Right cardiac atrium (tissue), 5 donors: ENCODE measurements at regions of chr10 and their contacts with region 1.

Region 1: DNA sequence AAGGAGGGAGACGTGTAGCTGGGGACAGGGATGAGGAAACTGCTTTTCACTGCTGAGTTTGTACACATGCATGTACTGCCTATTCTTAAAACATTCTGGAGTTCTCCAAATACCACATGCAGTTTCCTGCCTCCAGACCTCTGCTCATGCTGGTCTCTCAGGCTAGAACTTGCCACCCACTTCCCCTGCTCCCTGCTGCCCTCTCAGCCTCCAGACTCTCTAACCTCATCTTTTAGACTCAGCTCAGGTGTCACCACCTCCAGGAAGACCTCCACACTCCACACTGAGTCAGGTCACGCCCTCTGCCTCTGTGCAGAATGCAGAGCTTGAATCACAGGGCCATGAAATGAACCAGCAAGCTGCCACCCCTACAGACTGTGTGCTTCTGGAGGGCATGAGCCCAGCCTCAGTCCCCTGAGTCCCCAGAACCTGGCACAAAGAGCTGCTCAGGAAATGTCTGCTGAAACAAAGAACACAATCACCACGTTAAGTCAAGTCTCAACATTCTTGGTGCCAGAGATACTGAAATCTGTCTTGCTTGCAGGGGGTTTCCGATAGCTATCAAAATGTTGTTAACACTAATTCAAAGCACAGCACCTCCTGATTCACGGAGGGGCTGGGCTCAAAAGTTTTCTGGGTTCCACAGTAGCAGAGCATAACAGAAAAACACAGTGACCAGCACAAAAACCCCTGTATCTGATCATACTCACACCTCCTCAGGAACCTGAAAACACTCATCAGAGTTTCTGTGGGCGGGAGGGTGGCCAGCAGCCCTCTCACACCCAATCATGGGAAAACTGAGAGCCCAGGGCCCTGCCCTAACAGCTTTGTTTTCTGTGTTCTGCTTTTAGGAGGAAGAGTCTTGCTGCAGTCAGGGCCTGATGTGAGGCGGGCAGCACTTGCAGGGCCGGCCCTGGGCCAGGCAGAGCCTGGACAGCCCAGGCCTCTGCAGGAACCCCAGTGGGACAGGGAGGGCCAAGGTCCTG is 21.1 kb downstream of the FAM53B start:
- DNase-seq: peak; percentile 58 to 84 (median 84)
- ATAC-seq: peak; percentile 61 to 77
- H3K4me3 ChIP-seq: no peak overlapping the region
- H3K27ac ChIP-seq: peak overlapping the region; percentile 97
- H3K4me1 ChIP-seq: peaks cover 48% of the 10 kb centered on the region
- H3K27me3 ChIP-seq: no peaks in the 10 kb centered on the region

Region 2: GRCh38 chr10:124403548-124403947 is 319.5 kb before region 1 on chr10:
- intact Hi-C with region 1: no loop called
- DNase-seq: no peak
- ATAC-seq: peak; percentile 80 to 86
- H3K4me3 ChIP-seq: no peak overlapping the region
- H3K27ac ChIP-seq: no peak overlapping the region
- H3K4me1 ChIP-seq: no peaks in the 10 kb centered on the region
- H3K27me3 ChIP-seq: no peaks in the 10 kb centered on the region

Region 3: DNA sequence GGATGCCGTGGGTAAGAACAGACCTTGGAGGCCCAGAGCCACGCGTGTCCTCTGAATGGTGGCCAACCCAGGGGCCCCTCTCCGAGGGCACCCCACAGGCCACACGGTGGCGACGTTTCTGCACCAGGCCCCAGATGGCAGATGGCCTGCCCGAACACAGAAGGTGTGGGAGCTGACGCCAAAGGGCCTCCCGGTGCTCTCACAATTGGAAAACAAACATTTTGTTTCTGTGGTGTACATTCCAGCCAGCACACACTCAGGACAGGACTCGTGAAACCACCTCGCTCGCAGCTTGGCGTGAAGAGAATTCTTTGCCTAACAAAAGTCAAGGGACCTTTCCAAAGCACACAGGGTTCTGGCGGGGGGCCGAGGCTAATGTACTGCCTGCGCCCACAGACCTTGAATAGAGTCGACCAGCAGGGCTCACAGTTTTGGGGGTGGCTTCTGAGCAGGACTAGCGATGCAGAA is 91.0 kb before region 1 on chr10:
- intact Hi-C with region 1: loop called in 1 of 4 experiments (anchors 5 kb)
- DNase-seq: peak; percentile 68 to 85 (median 80)
- ATAC-seq: peak; percentile 74 to 81
- H3K4me3 ChIP-seq: no peak overlapping the region
- H3K27ac ChIP-seq: peak overlapping the region; percentile 61
- H3K4me1 ChIP-seq: peaks cover 45% of the 10 kb centered on the region
- H3K27me3 ChIP-seq: no peaks in the 10 kb centered on the region